Dorsolateral prefrontal cortex (tissue), 120 donors: ENCODE measurements at regions of chr3 and their contacts with region 1.

Region 1: DNA sequence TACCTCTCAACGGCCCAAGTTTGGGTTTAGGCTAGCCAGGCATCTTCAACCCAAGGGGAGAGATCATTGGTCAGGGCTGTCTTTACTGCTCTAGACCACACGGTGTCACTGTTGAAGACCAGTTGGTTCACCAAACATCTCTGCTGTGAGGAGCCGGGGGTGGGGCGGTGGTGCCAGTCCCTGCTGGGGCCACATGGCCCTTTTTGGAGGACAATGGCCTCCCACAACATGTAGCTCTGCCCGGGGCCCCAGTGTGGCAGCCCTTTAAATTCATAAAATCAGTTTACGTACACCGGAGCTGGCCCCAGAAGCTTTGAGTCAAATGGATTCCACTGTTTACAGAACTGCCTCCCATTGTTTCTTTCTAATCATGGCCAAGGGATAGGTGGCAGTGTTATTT is 19.1 kb upstream of the TM4SF18 start:
- DNase-seq: peak in 7 of 10 donors; percentile 29 to 57 (median 45)
- H3K4me3 ChIP-seq: no peak overlapping the region
- H3K27ac ChIP-seq: no peak overlapping the region
- H3K27me3 ChIP-seq: peaks cover 0 to 23% (median 0%) of the 10 kb centered on the region in 45 donors
- CTCF ChIP-seq: peak; percentile 23 to 83 (median 66)

Region 2: DNA sequence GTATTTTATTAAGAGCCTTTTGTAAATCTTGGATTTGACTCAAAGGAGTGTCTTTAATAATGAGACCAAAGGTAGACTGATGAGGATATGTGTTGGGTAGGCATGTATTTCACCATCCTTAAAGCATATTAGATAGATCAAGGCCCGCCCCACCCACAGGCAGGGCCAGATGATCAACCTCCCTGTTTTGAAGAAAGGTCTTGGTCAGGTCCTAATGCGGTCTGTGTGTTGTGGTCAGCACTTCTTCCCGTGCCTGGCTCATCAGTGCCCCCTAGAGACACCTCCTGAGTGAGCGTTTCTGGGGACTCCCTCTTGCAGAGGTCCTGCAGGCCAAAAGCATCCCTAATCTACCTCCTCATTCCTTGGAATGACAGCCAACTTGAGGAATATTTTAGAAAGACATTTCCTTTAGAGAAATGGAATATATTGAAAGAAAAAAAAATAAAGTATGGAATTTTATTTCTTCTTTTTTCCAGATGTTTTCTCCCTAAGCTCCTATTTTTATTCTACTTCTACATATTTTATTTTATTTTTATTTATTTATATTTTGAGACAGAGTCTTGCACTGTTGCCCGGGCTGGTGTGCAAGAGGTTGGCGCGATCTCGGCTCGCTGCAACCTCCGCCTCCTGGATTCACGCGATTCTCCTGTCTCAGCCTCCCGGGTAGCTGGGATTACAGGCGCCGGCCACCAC is 127.9 kb after region 1 on chr3:
- intact Hi-C with region 1: loop called in 1 of 2 experiments (anchors 1 kb)
- DNase-seq: peak in 9 of 10 donors; percentile 14 to 74 (median 54)
- H3K4me3 ChIP-seq: no peak overlapping the region
- H3K27ac ChIP-seq: peak overlapping the region in 11 of 59 donors; percentile 3 to 59 (median 25)
- H3K27me3 ChIP-seq: peaks cover 0 to 7% (median 0%) of the 10 kb centered on the region in 45 donors
- CTCF ChIP-seq: peak; percentile 39 to 89 (median 78)